ENCODE measurements at regions of chr1 and their contacts with region 1.

Region 1: DNA sequence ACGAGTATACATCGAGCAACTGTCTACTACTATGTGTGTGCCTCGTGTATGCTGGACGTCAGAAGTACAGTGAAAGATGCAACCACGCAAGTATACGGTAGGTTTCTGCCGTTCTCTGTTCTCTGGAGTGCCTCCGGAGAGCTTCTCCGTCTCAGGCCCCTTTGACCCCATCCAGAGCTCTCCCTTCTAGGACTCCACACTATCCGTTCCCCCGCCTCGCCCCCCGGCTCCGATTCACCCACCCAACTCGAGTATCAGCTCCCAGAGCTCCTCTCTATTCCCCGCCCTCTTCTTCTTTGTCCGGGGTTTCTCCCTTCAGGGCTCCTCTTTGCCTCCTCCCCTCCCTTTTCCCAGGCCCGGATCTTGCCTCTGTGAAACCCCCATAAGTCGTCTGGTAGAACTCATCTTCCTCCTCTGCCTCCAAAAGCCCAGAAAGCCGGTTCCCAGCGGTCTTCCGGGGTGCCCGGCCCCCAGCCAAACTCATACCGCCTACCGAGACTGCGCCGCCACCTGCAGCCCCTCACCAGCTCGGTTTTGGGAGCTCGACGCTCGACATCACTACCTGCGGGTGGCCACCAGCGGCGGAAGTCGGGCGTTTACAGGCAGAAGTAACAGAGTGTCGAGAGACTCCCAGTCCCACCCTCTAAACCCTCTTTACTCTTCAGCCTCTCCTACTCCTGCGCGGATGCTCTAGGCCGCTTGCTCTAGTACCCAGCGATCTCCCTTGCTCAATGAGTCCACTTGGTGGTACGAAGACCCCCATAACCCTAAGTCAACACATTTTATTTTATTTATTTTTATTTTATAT is at the start of gene VPS72:
- DNase-seq: peak; percentile 93
- H3K4me3 Mint-ChIP-seq: peak within 1 kb of the TSS; percentile 83
- H3K27ac Mint-ChIP-seq: peak within 1 kb of the TSS; percentile 90
- H3K4me1 Mint-ChIP-seq: peaks cover 33% of the 10 kb centered on the region
- H3K27me3 Mint-ChIP-seq: no peaks in the 10 kb centered on the region
- CTCF ChIP-seq: no peak
- total RNA-seq, gene VPS72: 106 and 108 TPM in 2 replicates

Region 2: GRCh38 chr1:151175910-151176309 is 13.9 kb before region 1 on chr1 and contains the start of gene TMOD4:
- CTCF ChIA-PET with region 1: interaction called, 5 read pairs
- POLR2A ChIA-PET with region 1: interaction called, 24 read pairs
- intact Hi-C with region 1: no loop called
- DNase-seq: no peak
- H3K4me3 Mint-ChIP-seq: no peak within 1 kb of the TSS
- H3K27ac Mint-ChIP-seq: peak within 1 kb of the TSS; percentile 7
- H3K4me1 Mint-ChIP-seq: no peaks in the 10 kb centered on the region
- H3K27me3 Mint-ChIP-seq: no peaks in the 10 kb centered on the region
- CTCF ChIP-seq: peak; percentile 56
- total RNA-seq, gene TMOD4: 1.1 TPM in 1 of 2 replicates, not detected in the other

Region 3: DNA sequence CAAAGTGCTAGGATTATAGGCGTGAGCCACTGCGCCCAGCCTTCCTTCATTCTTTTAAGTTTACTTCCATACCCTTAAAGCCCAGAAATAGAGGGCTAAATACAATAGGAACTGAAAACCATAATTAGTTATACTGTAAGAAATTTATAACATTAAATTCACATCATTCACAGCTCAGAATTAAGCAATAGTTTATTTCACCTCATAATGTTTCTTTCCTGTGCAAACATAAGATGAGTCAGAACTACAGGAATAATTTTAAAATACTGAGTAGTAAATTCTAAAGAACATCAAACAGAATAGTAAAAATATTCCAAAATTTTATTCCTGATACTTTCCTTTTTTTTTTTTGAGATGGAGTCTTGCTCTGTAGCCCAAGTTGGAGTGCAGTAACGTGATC is 245.3 kb after region 1 on chr1:
- CTCF ChIA-PET with region 1: no interaction called
- POLR2A ChIA-PET with region 1: no interaction called
- intact Hi-C with region 1: no loop called
- DNase-seq: peak; percentile 13
- H3K4me3 Mint-ChIP-seq: no peak overlapping the region
- H3K27ac Mint-ChIP-seq: peak overlapping the region; percentile 14
- H3K4me1 Mint-ChIP-seq: peaks cover 6% of the 10 kb centered on the region
- H3K27me3 Mint-ChIP-seq: no peaks in the 10 kb centered on the region
- CTCF ChIP-seq: no peak